Common myeloid progenitor, CD34-positive (primary cell): ENCODE measurements at regions of chr21 and their contacts with region 1.

Region 1: DNA sequence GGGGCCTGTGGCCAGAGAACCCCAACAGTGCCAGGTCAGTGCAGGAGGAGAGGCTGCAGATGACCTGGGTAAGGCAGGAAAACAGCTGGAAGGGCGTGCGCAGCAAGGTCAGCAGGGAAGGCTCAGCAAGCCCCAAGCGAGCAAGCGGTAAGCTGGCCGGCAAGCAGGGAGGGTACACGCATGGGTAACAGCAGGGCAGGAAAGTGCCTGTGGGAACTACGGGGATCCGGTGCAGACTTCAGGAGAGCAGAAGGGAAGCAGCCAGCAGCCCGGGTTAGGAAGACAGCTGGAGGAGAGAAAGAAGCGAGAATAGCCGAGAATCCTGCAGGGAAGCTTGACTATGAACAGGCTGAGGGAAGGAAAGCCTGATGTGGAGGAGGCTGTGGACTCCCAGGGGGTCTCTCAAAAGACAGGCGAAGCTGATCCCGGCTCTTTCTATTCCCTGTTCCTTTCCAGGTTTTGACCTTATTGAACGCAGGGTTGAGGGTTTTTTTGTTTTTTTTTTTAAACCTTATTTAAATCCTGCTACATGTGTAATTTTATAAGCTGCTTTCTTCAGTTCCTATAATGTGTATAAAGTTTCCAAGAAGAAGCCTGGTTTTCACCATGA is 20.9 kb downstream of the UMODL1 start:
- DNase-seq: no peak
- H3K4me3 ChIP-seq: no peak overlapping the region
- H3K27ac ChIP-seq: no peak overlapping the region
- H3K4me1 ChIP-seq: peaks cover 0 to 15% (median 4%) of the 10 kb centered on the region in 4 experiments
- H3K27me3 ChIP-seq: no peaks in the 10 kb centered on the region

Region 2: DNA sequence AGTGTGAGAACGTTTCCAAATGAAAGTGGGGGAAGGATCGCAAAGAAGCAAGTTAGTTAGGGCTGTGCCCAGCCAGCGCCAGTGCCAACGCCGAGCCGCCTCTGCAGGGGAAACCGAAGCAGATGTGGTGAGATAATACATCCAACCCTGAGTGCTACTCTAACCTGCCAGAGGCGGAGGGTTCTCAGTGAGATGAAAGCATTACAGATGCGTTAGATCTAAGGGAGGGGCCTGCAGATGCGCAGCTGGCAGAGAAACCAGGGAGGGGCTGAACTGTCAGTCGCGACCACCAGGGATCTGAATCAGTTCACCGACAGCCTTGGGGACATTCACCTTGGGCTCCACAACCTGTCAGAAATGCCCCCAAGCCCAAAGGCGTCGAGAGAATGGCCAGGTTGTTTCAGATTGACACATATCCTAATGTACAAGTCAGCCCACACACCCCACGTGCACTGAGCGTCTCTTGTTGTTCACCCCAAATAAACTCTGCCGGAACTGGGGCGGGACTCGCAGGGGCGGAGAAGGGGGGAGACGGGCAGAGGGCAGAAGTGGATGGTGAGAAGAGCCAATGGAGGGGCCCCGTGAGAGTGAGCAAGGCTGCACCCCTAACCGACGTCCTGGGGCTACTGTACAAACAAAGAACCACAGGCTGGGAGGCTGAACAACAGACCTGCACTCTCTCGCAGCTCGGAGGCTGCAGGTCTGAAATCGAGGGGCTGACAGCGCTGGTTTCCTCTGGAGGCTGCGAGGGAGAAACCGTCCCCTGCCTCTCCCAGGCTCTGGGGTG is 29.6 kb before region 1 on chr21:
- CTCF ChIA-PET with region 1: no interaction called
- POLR2A ChIA-PET with region 1: no interaction called
- DNase-seq: peak; percentile 93 to 99 (median 97)
- H3K4me3 ChIP-seq: peak overlapping the region in 6 of 7 experiments; percentile 34 to 76 (median 51)
- H3K27ac ChIP-seq: peak overlapping the region; percentile 73 to 87
- H3K4me1 ChIP-seq: peaks cover 12 to 63% (median 62%) of the 10 kb centered on the region in 4 experiments
- H3K27me3 ChIP-seq: no peaks in the 10 kb centered on the region

Region 3: GRCh38 chr21:42080788-42081083 is 11.3 kb before region 1 on chr21:
- CTCF ChIA-PET with region 1: interaction called, 11 read pairs
- POLR2A ChIA-PET with region 1: no interaction called
- DNase-seq: peak in 2 of 3 donors; percentile 22 to 40
- H3K4me3 ChIP-seq: no peak overlapping the region
- H3K27ac ChIP-seq: no peak overlapping the region
- H3K4me1 ChIP-seq: peaks cover 0 to 24% (median 23%) of the 10 kb centered on the region in 4 experiments
- H3K27me3 ChIP-seq: no peaks in the 10 kb centered on the region